Activated CD4-positive, alpha-beta T cell treated with anti-CD3 and anti-CD28 coated beads, Interleukin-2, amount 10 ng/mL, durations not matched to agents 24 days and 14 days (primary cell): ENCODE measurements at regions of chr5 and their contacts with region 1.

Region 1: DNA sequence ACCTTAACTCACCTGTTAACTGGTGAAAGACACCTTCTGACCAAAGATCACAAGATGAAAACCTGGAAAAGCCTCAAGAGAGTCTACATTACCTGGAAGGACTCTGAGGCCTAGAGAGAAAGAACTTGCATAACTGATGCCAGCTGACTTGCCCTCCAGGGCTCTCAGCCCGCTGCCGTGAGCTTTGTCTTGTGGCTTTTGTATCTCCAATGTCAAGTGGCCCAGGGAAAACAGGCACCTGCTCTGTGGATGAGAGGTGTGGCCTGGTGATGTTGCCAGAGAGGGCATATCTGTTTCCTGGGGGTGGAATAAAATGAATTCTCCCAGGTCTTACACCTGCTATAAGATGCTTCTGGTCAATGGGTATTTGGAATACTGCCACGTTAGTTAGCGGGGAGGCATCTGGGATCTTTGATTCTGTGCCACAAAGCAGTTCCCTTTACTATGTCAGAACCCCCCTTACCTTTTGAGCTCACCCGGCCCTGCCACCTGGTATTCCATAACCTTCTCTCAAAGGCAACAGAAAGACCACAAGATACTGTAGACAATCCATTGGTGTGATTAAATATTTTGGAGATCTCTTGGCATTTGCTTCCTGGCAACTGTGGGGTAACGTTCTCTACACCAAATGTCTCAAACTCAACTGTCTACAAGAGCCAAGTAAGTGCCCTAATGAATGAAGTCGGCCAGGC is 54.9 kb upstream of the N4BP3 start:
- DNase-seq: no peak
- H3K4me3 Mint-ChIP-seq: no peak overlapping the region
- H3K27ac Mint-ChIP-seq: no peak overlapping the region
- H3K4me1 Mint-ChIP-seq: no peaks in the 10 kb centered on the region
- H3K27me3 Mint-ChIP-seq: peaks cover 2% of the 10 kb centered on the region

Region 2: DNA sequence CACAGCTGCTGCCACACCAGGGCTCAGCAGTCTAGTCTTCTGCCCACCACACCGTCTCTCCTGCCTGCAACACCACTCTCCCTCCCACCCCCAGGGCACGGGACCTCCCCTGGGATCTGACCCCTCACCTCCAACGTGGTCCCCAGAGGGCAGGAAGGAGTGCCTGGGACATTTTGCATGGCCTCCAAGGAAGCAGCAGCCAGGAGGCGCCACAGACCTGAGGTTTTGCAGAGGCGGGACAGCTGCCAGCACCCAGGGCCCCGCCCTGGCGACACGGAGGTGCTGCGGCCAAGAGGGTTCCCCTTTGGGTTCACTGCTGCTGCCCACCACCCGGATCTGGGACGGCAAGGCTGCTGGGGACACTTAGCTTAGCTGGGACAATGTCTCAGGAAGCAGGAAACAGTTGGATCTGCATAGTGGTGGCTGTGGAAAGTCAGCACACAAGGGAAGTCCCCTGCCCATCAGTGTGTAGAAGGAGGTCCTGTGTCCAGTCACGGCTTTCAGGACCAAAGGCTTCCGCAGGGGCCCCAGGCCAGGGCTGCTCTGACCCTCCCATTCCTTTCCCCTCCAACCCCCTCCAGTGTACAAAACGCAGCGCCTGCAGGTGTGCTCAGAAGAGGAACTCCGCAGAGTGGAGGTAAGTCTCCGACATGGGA is 76.3 kb before region 1 on chr5:
- intact Hi-C with region 1: loop called (anchors 1 kb)
- DNase-seq: peak; percentile 72
- H3K4me3 Mint-ChIP-seq: no peak overlapping the region
- H3K27ac Mint-ChIP-seq: no peak overlapping the region
- H3K4me1 Mint-ChIP-seq: peaks cover 2% of the 10 kb centered on the region
- H3K27me3 Mint-ChIP-seq: peaks cover 54% of the 10 kb centered on the region

Region 3: DNA sequence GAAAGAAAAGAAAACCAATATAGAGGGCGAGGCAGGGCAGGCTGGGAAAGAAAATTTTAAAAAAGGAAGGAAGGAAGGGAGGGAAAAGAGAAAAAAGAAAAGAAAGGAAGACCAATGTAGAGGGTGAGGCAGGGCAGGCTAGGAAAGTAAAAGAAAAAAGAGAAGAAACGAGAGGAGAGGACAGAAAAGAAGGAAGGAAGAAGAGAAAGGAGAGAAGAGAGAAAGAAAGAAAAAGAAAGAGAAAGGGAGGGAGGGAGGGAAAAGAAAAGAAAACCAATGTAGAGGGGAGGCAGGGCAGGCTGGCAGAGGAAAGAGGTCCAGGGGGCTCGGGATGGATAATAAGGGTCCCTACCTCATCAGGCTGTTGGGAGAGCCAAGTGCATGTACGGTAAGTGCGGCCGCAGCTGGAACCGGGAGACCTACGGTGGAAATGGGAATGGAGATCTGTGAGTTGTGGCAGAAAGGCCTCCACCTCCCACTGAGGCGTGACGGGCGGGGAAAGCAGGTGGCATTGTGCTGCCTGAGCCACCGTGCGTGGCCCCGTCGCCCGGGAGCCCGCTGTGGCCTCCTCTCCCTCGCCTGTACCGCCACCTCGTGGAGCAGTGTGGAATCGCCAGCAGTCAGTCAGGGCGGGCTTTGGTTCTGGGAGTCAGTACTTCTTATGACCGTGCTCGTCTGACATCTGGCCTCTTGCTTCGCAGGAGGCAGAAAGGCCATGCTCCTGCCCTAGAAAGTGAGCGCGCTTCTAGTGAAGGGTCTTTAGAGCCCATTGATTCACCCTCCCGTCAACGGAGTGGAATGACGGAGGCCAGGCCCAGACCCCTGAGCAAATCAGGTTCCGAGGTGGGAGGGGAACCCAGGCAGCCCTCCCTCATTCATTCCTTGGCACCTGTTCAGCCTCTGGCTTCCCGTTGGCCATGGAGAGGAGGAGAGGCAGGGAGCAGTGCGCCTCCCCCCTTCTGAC is 105.6 kb after region 1 on chr5:
- intact Hi-C with region 1: no loop called
- DNase-seq: peak; percentile 98
- H3K4me3 Mint-ChIP-seq: peak overlapping the region; percentile 54
- H3K27ac Mint-ChIP-seq: no peak overlapping the region
- H3K4me1 Mint-ChIP-seq: peaks cover 5% of the 10 kb centered on the region
- H3K27me3 Mint-ChIP-seq: peaks cover 22% of the 10 kb centered on the region

Region 4: GRCh38 chr5:178273665-178274541 is 215.4 kb after region 1 on chr5:
- intact Hi-C with region 1: no loop called
- DNase-seq: no peak
- H3K4me3 Mint-ChIP-seq: no peak overlapping the region
- H3K27ac Mint-ChIP-seq: no peak overlapping the region
- H3K4me1 Mint-ChIP-seq: no peaks in the 10 kb centered on the region
- H3K27me3 Mint-ChIP-seq: no peaks in the 10 kb centered on the region